Naive thymus-derived CD4-positive, alpha-beta T cell (primary cell): ENCODE measurements at regions of chrX and their contacts with region 1.

Region 1: GRCh38 chrX:136880452-136881013 is at the start of gene RBMX:
- DNase-seq: peak; percentile 75 to 92 (median 89)
- ATAC-seq: peak; percentile 94
- H3K4me3 ChIP-seq: peak within 1 kb of the TSS; percentile 87
- H3K4me3 Mint-ChIP-seq: peak within 1 kb of the TSS; percentile 91 to 99 (median 97)
- H3K27ac ChIP-seq: peak within 1 kb of the TSS; percentile 95
- H3K27ac Mint-ChIP-seq: peak within 1 kb of the TSS; percentile 96 to 100 (median 99)
- H3K4me1 ChIP-seq: peaks cover 4 to 9% of the 10 kb centered on the region in 2 donors
- H3K4me1 Mint-ChIP-seq: peaks cover 0 to 33% (median 25%) of the 10 kb centered on the region in 7 donors
- H3K27me3 ChIP-seq: no peaks in the 10 kb centered on the region
- H3K27me3 Mint-ChIP-seq: no peaks in the 10 kb centered on the region
- total RNA-seq, gene RBMX: 204 to 263 (median 259) TPM

Region 2: GRCh38 chrX:136767104-136767941 is 113.2 kb before region 1 on chrX:
- CTCF ChIA-PET with region 1: no interaction called
- POLR2A ChIA-PET with region 1: interaction called, 29 read pairs
- intact Hi-C with region 1: loop called (anchors 1 to 2 kb)
- DNase-seq: peak; percentile 20 to 48 (median 41)
- ATAC-seq: peak; percentile 81
- H3K4me3 ChIP-seq: peak overlapping the region; percentile 61
- H3K4me3 Mint-ChIP-seq: peak overlapping the region; percentile 80 to 90 (median 82)
- H3K27ac ChIP-seq: peak overlapping the region; percentile 66
- H3K27ac Mint-ChIP-seq: peak overlapping the region; percentile 66 to 94 (median 87)
- H3K4me1 ChIP-seq: peaks cover 17 to 46% of the 10 kb centered on the region in 2 donors
- H3K4me1 Mint-ChIP-seq: peaks cover 27 to 81% (median 68%) of the 10 kb centered on the region in 7 donors
- H3K27me3 ChIP-seq: no peaks in the 10 kb centered on the region
- H3K27me3 Mint-ChIP-seq: no peaks in the 10 kb centered on the region

Region 3: GRCh38 chrX:136909706-136910564 is 29.4 kb after region 1 on chrX:
- CTCF ChIA-PET with region 1: no interaction called
- POLR2A ChIA-PET with region 1: interaction called, 11 read pairs
- intact Hi-C with region 1: loop called (anchors 1 kb)
- DNase-seq: peak; percentile 10 to 59 (median 39)
- ATAC-seq: peak; percentile 75
- H3K4me3 ChIP-seq: peak overlapping the region; percentile 84
- H3K4me3 Mint-ChIP-seq: peak overlapping the region; percentile 87 to 97 (median 96)
- H3K27ac ChIP-seq: peak overlapping the region; percentile 89
- H3K27ac Mint-ChIP-seq: peak overlapping the region; percentile 75 to 97 (median 91)
- H3K4me1 ChIP-seq: peaks cover 0 to 7% of the 10 kb centered on the region in 2 donors
- H3K4me1 Mint-ChIP-seq: peaks cover 0 to 22% (median 11%) of the 10 kb centered on the region in 7 donors
- H3K27me3 ChIP-seq: no peaks in the 10 kb centered on the region
- H3K27me3 Mint-ChIP-seq: no peaks in the 10 kb centered on the region

Region 4: DNA sequence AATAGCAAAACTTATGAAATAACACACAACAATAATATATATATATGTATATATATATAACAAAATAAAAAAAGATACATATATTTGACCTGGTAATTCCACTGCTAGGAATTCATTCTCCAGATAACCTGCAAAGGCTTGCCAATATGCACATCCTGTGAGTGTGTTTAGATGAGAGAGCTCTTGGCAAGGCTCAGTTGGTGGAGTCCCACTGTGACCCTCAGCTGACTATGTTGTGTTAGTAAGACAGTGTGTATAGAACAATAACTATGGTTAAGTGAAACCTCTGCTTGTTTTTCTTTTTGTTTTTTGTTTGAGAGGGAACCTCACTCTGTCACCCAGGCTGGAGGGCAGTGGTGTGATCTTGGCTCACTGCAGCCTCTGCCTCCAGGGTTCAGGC is 39.5 kb after region 1 on chrX:
- CTCF ChIA-PET with region 1: interaction called, 3 read pairs
- POLR2A ChIA-PET with region 1: interaction called, 5 read pairs
- intact Hi-C with region 1: loop called (anchors 5 kb)
- DNase-seq: no peak
- ATAC-seq: no peak
- H3K4me3 ChIP-seq: no peak overlapping the region
- H3K4me3 Mint-ChIP-seq: no peak overlapping the region
- H3K27ac ChIP-seq: no peak overlapping the region
- H3K27ac Mint-ChIP-seq: no peak overlapping the region
- H3K4me1 ChIP-seq: no peaks in the 10 kb centered on the region
- H3K4me1 Mint-ChIP-seq: peaks cover 0 to 2% (median 2%) of the 10 kb centered on the region in 7 donors
- H3K27me3 ChIP-seq: no peaks in the 10 kb centered on the region
- H3K27me3 Mint-ChIP-seq: no peaks in the 10 kb centered on the region

Region 5: DNA sequence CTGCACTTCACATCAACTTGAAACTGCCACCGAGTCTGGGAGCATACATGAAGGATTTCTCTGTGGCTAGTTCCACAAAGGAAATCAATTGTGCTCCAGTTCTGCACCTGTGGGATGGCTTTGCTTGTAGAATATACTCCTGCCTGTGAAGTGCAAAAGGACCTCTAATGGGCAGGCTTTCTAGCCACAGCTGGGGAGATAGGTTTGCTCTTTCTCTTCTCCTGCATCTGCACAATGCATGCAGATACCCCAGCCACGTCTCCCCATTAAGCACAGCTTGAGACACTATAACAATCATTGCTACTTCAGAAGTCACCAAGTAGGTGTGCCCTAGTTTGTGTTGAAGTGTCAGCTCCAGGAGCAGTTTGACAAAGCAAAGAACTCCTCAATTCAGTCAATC is 1050.0 kb after region 1 on chrX:
- CTCF ChIA-PET with region 1: no interaction called
- POLR2A ChIA-PET with region 1: no interaction called
- intact Hi-C with region 1: no loop called
- DNase-seq: no peak
- ATAC-seq: no peak
- H3K4me3 ChIP-seq: no peak overlapping the region
- H3K4me3 Mint-ChIP-seq: no peak overlapping the region
- H3K27ac ChIP-seq: no peak overlapping the region
- H3K27ac Mint-ChIP-seq: no peak overlapping the region
- H3K4me1 ChIP-seq: no peaks in the 10 kb centered on the region
- H3K4me1 Mint-ChIP-seq: no peaks in the 10 kb centered on the region
- H3K27me3 ChIP-seq: no peaks in the 10 kb centered on the region
- H3K27me3 Mint-ChIP-seq: peaks cover 0 to 7% (median 0%) of the 10 kb centered on the region in 5 donors

Region 6: DNA sequence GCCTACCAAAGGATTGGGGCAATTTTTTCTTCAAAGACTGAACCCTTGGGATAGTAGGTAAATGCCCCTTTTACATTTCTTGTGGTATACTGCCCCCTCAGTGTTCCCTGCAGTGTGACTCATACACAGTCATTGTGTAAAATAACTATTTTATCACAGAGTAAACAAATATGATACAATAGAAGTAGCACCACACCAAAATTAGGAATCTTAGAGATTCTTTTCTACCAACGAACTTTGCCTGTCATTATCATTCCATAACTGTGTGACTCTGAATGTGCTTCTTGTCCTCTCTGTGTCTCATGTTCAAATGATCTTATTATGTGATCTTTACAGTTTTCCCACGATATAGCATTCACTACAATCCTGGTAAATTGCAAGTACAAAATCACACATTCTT is 1202.4 kb after region 1 on chrX:
- CTCF ChIA-PET with region 1: no interaction called
- POLR2A ChIA-PET with region 1: no interaction called
- intact Hi-C with region 1: no loop called
- DNase-seq: no peak
- ATAC-seq: no peak
- H3K4me3 ChIP-seq: no peak overlapping the region
- H3K4me3 Mint-ChIP-seq: no peak overlapping the region
- H3K27ac ChIP-seq: no peak overlapping the region
- H3K27ac Mint-ChIP-seq: no peak overlapping the region
- H3K4me1 ChIP-seq: no peaks in the 10 kb centered on the region
- H3K4me1 Mint-ChIP-seq: peaks cover 0 to 2% (median 0%) of the 10 kb centered on the region in 7 donors
- H3K27me3 ChIP-seq: no peaks in the 10 kb centered on the region
- H3K27me3 Mint-ChIP-seq: no peaks in the 10 kb centered on the region